Gastrocnemius medialis (tissue), 4 donors: ENCODE measurements at regions of chr2 and their contacts with region 1.

Region 1: GRCh38 chr2:196926562-196927375 is at the start of gene PGAP1:
- DNase-seq: peak; percentile 65 to 81
- ATAC-seq: peak; percentile 90 to 91
- H3K4me3 ChIP-seq: peak within 1 kb of the TSS; percentile 78 to 90 (median 84)
- H3K27ac ChIP-seq: peak within 1 kb of the TSS; percentile 82 to 91 (median 84)
- H3K4me1 ChIP-seq: peaks cover 0 to 16% of the 10 kb centered on the region in 2 donors
- H3K27me3 ChIP-seq: no peaks in the 10 kb centered on the region
- CTCF ChIP-seq: no peak
- POLR2A ChIP-seq: peak; percentile 62 to 77
- total RNA-seq, gene PGAP1: 1.3 to 3.7 (median 1.8) TPM

Region 2: GRCh38 chr2:196798980-196799379 is 127.8 kb before region 1 on chr2:
- in situ Hi-C with region 1: no loop called
- intact Hi-C with region 1: loop called (anchors 2 kb)
- DNase-seq: no peak
- ATAC-seq: no peak
- H3K4me3 ChIP-seq: peak overlapping the region; percentile 63 to 73 (median 70)
- H3K27ac ChIP-seq: peak overlapping the region; percentile 75 to 81 (median 78)
- H3K4me1 ChIP-seq: peaks cover 11 to 18% of the 10 kb centered on the region in 2 donors
- H3K27me3 ChIP-seq: no peaks in the 10 kb centered on the region
- CTCF ChIP-seq: no peak
- POLR2A ChIP-seq: no peak

Region 3: GRCh38 chr2:196987649-196988364 is 61.0 kb after region 1 on chr2:
- in situ Hi-C with region 1: no loop called
- intact Hi-C with region 1: loop called (anchors 5 kb)
- DNase-seq: no peak
- ATAC-seq: peak; percentile 87 to 90
- H3K4me3 ChIP-seq: peak overlapping the region; percentile 34 to 36 (median 34)
- H3K27ac ChIP-seq: peak overlapping the region; percentile 18 to 44 (median 30)
- H3K4me1 ChIP-seq: peaks cover 18 to 22% of the 10 kb centered on the region in 2 donors
- H3K27me3 ChIP-seq: no peaks in the 10 kb centered on the region
- CTCF ChIP-seq: no peak
- POLR2A ChIP-seq: no peak